Heart right ventricle (tissue), 16 donors: ENCODE measurements at regions of chr12 and their contacts with region 1.

Region 1: GRCh38 chr12:42237052-42237852 is 796 bp downstream of the YAF2 start:
- DNase-seq: peak; percentile 68 to 78
- ATAC-seq: peak; percentile 66 to 88 (median 72)
- H3K4me3 ChIP-seq: peak overlapping the region; percentile 60 to 92 (median 76)
- H3K27ac ChIP-seq: peak overlapping the region; percentile 88 to 99 (median 94)
- H3K4me1 ChIP-seq: peaks cover 0 to 58% (median 47%) of the 10 kb centered on the region in 9 donors
- H3K27me3 ChIP-seq: no peaks in the 10 kb centered on the region
- CTCF ChIP-seq: peak in 8 of 9 donors; percentile 17 to 58 (median 45)

Region 2: GRCh38 chr12:42144408-42145196 is 92.7 kb before region 1 on chr12 and contains the start of gene GXYLT1:
- intact Hi-C with region 1: loop called in 7 of 10 experiments (anchors 2 to 10 kb)
- DNase-seq: peak; percentile 93 to 95
- ATAC-seq: peak; percentile 98 to 100 (median 99)
- H3K4me3 ChIP-seq: peak within 1 kb of the TSS; percentile 49 to 87 (median 76)
- H3K27ac ChIP-seq: peak within 1 kb of the TSS; percentile 55 to 91 (median 88)
- H3K4me1 ChIP-seq: peaks cover 0 to 40% (median 29%) of the 10 kb centered on the region in 9 donors
- H3K27me3 ChIP-seq: no peaks in the 10 kb centered on the region
- CTCF ChIP-seq: peak in 2 of 9 donors; percentile 13 to 17
- total RNA-seq, gene GXYLT1: 4.2 to 7.8 (median 5.7) TPM

Region 3: GRCh38 chr12:42315108-42315507 is 77.9 kb after region 1 on chr12:
- intact Hi-C with region 1: loop called in 4 of 10 experiments (anchors 5 to 10 kb)
- DNase-seq: no peak
- ATAC-seq: peak in 3 of 8 donors; percentile 52 to 57 (median 55)
- H3K4me3 ChIP-seq: no peak overlapping the region
- H3K27ac ChIP-seq: no peak overlapping the region
- H3K4me1 ChIP-seq: peaks cover 0 to 5% (median 0%) of the 10 kb centered on the region in 9 donors
- H3K27me3 ChIP-seq: no peaks in the 10 kb centered on the region
- CTCF ChIP-seq: no peak

Region 4: GRCh38 chr12:42325653-42326474 is 88.6 kb after region 1 on chr12 and contains the starts of genes PPHLN1 and ZCRB1:
- intact Hi-C with region 1: loop called in 6 of 10 experiments (anchors 5 to 10 kb)
- DNase-seq: peak; percentile 79 to 81
- ATAC-seq: peak; percentile 96 to 99 (median 98)
- H3K4me3 ChIP-seq: peak within 1 kb of the TSS; percentile 60 to 94 (median 74)
- H3K27ac ChIP-seq: peak within 1 kb of the TSS; percentile 23 to 93 (median 80)
- H3K4me1 ChIP-seq: peaks cover 3 to 38% (median 22%) of the 10 kb centered on the region in 9 donors
- H3K27me3 ChIP-seq: no peaks in the 10 kb centered on the region
- CTCF ChIP-seq: no peak
- total RNA-seq, gene PPHLN1: 28.2 to 41.8 (median 34.8) TPM
- total RNA-seq, gene ZCRB1: 51.0 to 69.6 (median 58.6) TPM

Region 5: GRCh38 chr12:42574851-42575266 is 337.6 kb after region 1 on chr12:
- intact Hi-C with region 1: loop called in 1 of 10 experiments (anchors 10 kb)
- DNase-seq: no peak
- ATAC-seq: no peak
- H3K4me3 ChIP-seq: no peak overlapping the region
- H3K27ac ChIP-seq: peak overlapping the region in 2 of 10 donors; percentile 2 to 55
- H3K4me1 ChIP-seq: peaks cover 2 to 73% (median 31%) of the 10 kb centered on the region in 9 donors
- H3K27me3 ChIP-seq: no peaks in the 10 kb centered on the region
- CTCF ChIP-seq: no peak